ENCODE measurements at regions of chr12 and their contacts with region 1.

Region 1: DNA sequence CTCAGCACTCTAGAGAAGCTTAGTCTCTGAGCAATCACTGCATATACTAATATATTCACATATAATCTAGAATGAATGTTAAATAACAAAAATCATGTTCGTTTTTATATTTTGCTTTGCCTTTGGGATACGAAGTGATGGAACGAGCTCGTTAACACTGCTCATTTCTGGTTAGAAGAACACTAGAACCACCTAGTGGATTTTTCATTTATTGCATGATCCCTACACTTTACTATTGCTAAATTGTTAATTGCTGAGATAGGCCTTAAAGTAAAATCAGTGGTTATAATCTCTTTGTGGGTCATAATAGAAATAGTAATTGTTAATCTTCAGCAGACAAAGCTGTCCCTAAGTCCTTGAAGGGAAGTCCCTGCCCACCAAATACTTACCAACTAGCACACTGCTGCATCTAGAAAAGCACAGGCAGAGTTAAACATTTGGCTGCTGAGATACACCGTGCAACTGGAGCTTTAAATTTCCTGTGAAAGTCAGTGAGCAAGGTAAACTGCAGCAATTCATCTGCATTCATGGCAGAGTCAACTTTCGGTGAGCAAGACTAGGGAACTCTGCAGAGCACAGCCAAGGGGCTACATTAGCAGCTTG is 353.7 kb downstream of the APAF1 start:
- DNase-seq: no peak
- H3K4me3 ChIP-seq: no peak overlapping the region
- H3K27ac ChIP-seq: no peak overlapping the region
- H3K4me1 ChIP-seq: no peaks in the 10 kb centered on the region
- H3K27me3 ChIP-seq: peaks cover 3% of the 10 kb centered on the region
- CTCF ChIP-seq: peak; percentile 78

Region 2: GRCh38 chr12:98188650-98189077 is 810.1 kb before region 1 on chr12:
- intact Hi-C with region 1: no loop called
- DNase-seq: no peak
- H3K4me3 ChIP-seq: no peak overlapping the region
- H3K27ac ChIP-seq: no peak overlapping the region
- H3K4me1 ChIP-seq: no peaks in the 10 kb centered on the region
- H3K27me3 ChIP-seq: no peaks in the 10 kb centered on the region
- CTCF ChIP-seq: no peak

Region 3: GRCh38 chr12:98470469-98471082 is 528.2 kb before region 1 on chr12:
- intact Hi-C with region 1: no loop called
- DNase-seq: no peak
- H3K4me3 ChIP-seq: no peak overlapping the region
- H3K27ac ChIP-seq: no peak overlapping the region
- H3K4me1 ChIP-seq: peaks cover 12% of the 10 kb centered on the region
- H3K27me3 ChIP-seq: no peaks in the 10 kb centered on the region
- CTCF ChIP-seq: no peak

Region 4: GRCh38 chr12:98698603-98699463 is 300.0 kb before region 1 on chr12:
- intact Hi-C with region 1: loop called (anchors 5 kb)
- DNase-seq: peak; percentile 41
- H3K4me3 ChIP-seq: no peak overlapping the region
- H3K27ac ChIP-seq: no peak overlapping the region
- H3K4me1 ChIP-seq: peaks cover 16% of the 10 kb centered on the region
- H3K27me3 ChIP-seq: no peaks in the 10 kb centered on the region
- CTCF ChIP-seq: peak; percentile 68

Measured in left ventricle myocardium inferior (tissue), 1 donor.